ENCODE measurements at regions of chr22 and their contacts with region 1.

Region 1: DNA sequence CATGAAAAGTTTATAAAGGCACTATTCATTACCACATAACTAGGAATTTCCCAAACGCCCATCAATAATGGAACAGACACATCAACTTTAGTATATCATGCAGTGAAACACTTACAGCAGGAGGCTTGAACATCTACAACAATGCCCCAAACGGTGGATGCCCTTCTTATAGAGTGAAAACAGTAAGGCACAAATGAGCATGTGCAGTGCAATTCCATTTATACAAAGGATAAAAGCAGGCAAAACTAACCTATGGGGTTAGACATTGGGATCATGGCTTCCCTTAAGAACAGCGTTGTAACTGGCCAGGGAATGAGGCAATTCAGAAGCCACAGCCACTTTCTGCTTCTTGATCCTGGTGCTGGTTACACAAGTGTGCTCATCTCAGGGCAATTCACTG is 1363.0 kb downstream of the TBC1D22A start:
- DNase-seq: no peak
- ATAC-seq: no peak
- H3K4me3 Mint-ChIP-seq: no peak overlapping the region
- H3K27ac Mint-ChIP-seq: no peak overlapping the region
- H3K4me1 Mint-ChIP-seq: peaks cover 7% of the 10 kb centered on the region
- H3K27me3 Mint-ChIP-seq: peaks cover 2% of the 10 kb centered on the region
- CTCF ChIP-seq: no peak

Region 2: DNA sequence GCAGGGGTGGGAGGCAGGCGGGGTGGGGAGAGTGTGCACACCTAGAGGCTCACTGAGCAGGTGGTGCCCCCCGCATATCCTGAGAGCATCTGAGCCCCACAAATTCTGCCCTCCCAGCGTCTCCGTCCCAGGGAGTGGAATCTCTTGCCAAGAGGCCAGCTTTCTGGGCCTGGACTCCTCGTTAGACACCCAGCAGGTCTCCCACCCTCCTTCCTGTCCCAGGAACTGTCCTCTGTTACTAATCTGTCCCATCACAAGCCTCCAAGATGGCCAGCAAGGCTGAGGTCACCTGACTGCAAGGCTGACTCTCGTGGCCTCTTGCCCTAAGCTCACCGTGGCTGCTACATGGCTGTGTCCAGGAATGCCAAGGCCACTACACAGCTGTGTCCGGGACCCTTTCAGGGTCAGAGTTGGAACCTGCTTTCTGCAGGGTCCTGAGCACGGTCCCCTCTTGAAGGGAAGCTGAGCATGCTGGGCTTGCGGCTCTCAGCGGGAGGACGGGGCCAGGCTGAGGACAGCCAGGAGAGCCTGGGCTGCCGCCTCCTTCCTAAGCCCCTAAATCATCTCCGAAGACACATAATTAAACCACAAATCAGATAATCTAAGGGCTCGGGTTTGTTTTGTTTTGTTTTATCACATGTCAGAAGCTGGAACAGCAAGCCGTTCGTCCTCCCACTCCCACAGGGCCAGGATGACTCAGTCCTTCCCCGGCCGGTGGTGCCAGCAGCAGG is 35.6 kb before region 1 on chr22:
- CTCF ChIA-PET with region 1: no interaction called
- POLR2A ChIA-PET with region 1: no interaction called
- intact Hi-C with region 1: no loop called
- DNase-seq: peak; percentile 13
- ATAC-seq: peak; percentile 49
- H3K4me3 Mint-ChIP-seq: peak overlapping the region; percentile 28
- H3K27ac Mint-ChIP-seq: no peak overlapping the region
- H3K4me1 Mint-ChIP-seq: peaks cover 51% of the 10 kb centered on the region
- H3K27me3 Mint-ChIP-seq: no peaks in the 10 kb centered on the region
- CTCF ChIP-seq: no peak

Region 3: DNA sequence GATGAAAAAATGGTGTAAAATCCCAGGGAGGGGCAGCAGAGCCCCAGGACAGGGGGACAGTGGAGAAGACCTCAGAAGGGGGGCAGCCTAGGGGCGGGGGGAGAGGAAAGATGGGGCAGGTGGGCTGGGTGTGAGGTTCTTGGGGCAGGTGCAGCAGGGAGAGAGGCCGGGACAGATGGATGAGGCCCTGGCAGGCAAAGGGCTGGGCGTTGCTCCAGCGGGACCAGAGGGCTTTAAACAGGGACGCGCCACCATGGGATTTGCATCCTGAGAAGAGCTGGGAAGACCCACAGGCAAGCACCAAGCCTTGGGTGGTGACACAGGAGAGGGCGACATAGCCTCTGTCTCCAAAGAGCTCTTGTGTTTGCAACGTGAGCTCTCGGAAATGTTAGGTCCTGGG is 20.2 kb before region 1 on chr22:
- CTCF ChIA-PET with region 1: no interaction called
- POLR2A ChIA-PET with region 1: interaction called, 12 read pairs
- intact Hi-C with region 1: no loop called
- DNase-seq: no peak
- ATAC-seq: no peak
- H3K4me3 Mint-ChIP-seq: no peak overlapping the region
- H3K27ac Mint-ChIP-seq: no peak overlapping the region
- H3K4me1 Mint-ChIP-seq: peaks cover 24% of the 10 kb centered on the region
- H3K27me3 Mint-ChIP-seq: peaks cover 2% of the 10 kb centered on the region
- CTCF ChIP-seq: no peak

Region 4: GRCh38 chr22:48188231-48188721 is 62.9 kb after region 1 on chr22:
- CTCF ChIA-PET with region 1: no interaction called
- POLR2A ChIA-PET with region 1: no interaction called
- intact Hi-C with region 1: no loop called
- DNase-seq: no peak
- ATAC-seq: no peak
- H3K4me3 Mint-ChIP-seq: no peak overlapping the region
- H3K27ac Mint-ChIP-seq: no peak overlapping the region
- H3K4me1 Mint-ChIP-seq: no peaks in the 10 kb centered on the region
- H3K27me3 Mint-ChIP-seq: peaks cover 4% of the 10 kb centered on the region
- CTCF ChIP-seq: no peak

Measured in activated B cell treated with CpG ODN at 0.5 μM for 24 hours (primary cell).